GM12878 (cell line): ENCODE measurements at regions of chr22 and their contacts with region 1.

Region 1: GRCh38 chr22:20418211-20418788 is 19.3 kb downstream of the SCARF2 start:
- DNase-seq: no peak
- ATAC-seq: peak; percentile 84
- H3K4me3 ChIP-seq: peak overlapping the region; percentile 45; the same call in 1 of the 2 replicates
- H3K27ac ChIP-seq: no peak overlapping the region
- H3K4me1 ChIP-seq: no peaks in the 10 kb centered on the region
- H3K27me3 ChIP-seq: no peaks in the 10 kb centered on the region
- CTCF ChIP-seq: peak; percentile 77 to 89 (median 80)
- EP300 ChIP-seq: no peak
- POLR2A ChIP-seq: no peak
- RAD21 ChIP-seq: peak; percentile 79

Region 2: GRCh38 chr22:20000169-20000621 is 418.1 kb before region 1 on chr22:
- CTCF ChIA-PET with region 1: no interaction called
- POLR2A ChIA-PET with region 1: no interaction called
- RAD21 ChIA-PET with region 1: no interaction called
- SMC1A ChIA-PET with region 1: no interaction called
- in situ Hi-C with region 1: no loop called
- intact Hi-C with region 1: no loop called
- DNase-seq: no peak
- ATAC-seq: no peak
- H3K4me3 ChIP-seq: no peak overlapping the region
- H3K27ac ChIP-seq: no peak overlapping the region
- H3K4me1 ChIP-seq: no peaks in the 10 kb centered on the region
- H3K27me3 ChIP-seq: peaks cover 0 to 2% of the 10 kb centered on the region in 2 experiments; a peak in 3 of 4 replicates
- CTCF ChIP-seq: no peak
- EP300 ChIP-seq: no peak
- POLR2A ChIP-seq: no peak
- RAD21 ChIP-seq: no peak

Region 3: GRCh38 chr22:20388200-20388599 is 30.1 kb before region 1 on chr22:
- CTCF ChIA-PET with region 1: no interaction called
- POLR2A ChIA-PET with region 1: no interaction called
- RAD21 ChIA-PET with region 1: no interaction called
- SMC1A ChIA-PET with region 1: no interaction called
- in situ Hi-C with region 1: no loop called
- intact Hi-C with region 1: no loop called
- DNase-seq: no peak
- ATAC-seq: no peak
- H3K4me3 ChIP-seq: no peak overlapping the region
- H3K27ac ChIP-seq: no peak overlapping the region
- H3K4me1 ChIP-seq: no peaks in the 10 kb centered on the region
- H3K27me3 ChIP-seq: peaks cover 0 to 3% of the 10 kb centered on the region in 2 experiments; a peak in 1 of 4 replicates
- CTCF ChIP-seq: no peak
- EP300 ChIP-seq: no peak
- POLR2A ChIP-seq: no peak
- RAD21 ChIP-seq: no peak

Region 4: DNA sequence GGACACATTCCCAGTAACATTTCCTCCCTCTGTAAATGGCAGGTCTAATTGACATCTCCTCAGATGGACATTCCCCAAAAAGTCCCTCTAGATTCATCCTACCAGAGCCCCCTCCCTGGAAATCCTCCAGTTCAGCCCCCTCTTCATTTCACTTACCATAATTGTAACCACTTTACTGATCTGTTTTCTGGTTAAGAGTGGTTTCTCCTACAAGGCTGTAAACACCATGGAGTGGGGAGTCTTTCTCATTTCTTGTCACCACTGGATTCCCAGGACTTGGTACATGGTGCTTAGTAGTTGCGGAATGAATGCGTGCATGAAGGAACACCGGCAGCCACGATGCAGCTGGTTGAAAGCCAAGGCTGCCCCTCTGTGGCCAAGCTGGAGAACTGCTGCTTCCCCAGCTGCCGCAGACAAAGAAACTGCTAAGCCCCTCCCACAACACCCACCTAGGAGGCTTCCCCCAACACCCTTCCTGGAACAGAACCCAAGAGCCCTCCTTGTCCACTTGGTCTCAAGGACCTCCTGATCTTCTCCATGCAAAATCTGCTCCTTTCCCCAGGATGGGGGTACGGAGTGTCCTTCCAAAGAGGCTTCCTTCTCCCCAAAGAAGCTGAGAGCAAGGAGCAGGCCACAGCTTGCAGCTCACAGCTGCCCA is 37.9 kb after region 1 on chr22:
- CTCF ChIA-PET with region 1: interaction called, 58 read pairs
- POLR2A ChIA-PET with region 1: interaction called, 3 read pairs
- RAD21 ChIA-PET with region 1: interaction called, 42 read pairs
- SMC1A ChIA-PET with region 1: interaction called, 20 read pairs
- in situ Hi-C with region 1: loop called (anchors 5 kb)
- intact Hi-C with region 1: loop called (anchors 1 kb)
- DNase-seq: peak; percentile 44
- ATAC-seq: peak; percentile 99
- H3K4me3 ChIP-seq: no peak overlapping the region
- H3K27ac ChIP-seq: no peak overlapping the region
- H3K4me1 ChIP-seq: peaks cover 9% of the 10 kb centered on the region
- H3K27me3 ChIP-seq: no peaks in the 10 kb centered on the region
- CTCF ChIP-seq: peak; percentile 92 to 95 (median 95)
- EP300 ChIP-seq: no peak
- POLR2A ChIP-seq: no peak
- RAD21 ChIP-seq: peak; percentile 78

Region 5: GRCh38 chr22:20463324-20464095 is 45.2 kb after region 1 on chr22:
- CTCF ChIA-PET with region 1: interaction called, 13 read pairs
- POLR2A ChIA-PET with region 1: no interaction called
- RAD21 ChIA-PET with region 1: interaction called, 3 read pairs
- SMC1A ChIA-PET with region 1: interaction called, 3 read pairs
- in situ Hi-C with region 1: loop called (anchors 5 kb)
- intact Hi-C with region 1: no loop called
- DNase-seq: no peak
- ATAC-seq: peak; percentile 77
- H3K4me3 ChIP-seq: no peak overlapping the region
- H3K27ac ChIP-seq: peak overlapping the region; percentile 51
- H3K4me1 ChIP-seq: peaks cover 17% of the 10 kb centered on the region
- H3K27me3 ChIP-seq: no peaks in the 10 kb centered on the region
- CTCF ChIP-seq: no peak
- EP300 ChIP-seq: no peak
- POLR2A ChIP-seq: no peak
- RAD21 ChIP-seq: no peak

Region 6: DNA sequence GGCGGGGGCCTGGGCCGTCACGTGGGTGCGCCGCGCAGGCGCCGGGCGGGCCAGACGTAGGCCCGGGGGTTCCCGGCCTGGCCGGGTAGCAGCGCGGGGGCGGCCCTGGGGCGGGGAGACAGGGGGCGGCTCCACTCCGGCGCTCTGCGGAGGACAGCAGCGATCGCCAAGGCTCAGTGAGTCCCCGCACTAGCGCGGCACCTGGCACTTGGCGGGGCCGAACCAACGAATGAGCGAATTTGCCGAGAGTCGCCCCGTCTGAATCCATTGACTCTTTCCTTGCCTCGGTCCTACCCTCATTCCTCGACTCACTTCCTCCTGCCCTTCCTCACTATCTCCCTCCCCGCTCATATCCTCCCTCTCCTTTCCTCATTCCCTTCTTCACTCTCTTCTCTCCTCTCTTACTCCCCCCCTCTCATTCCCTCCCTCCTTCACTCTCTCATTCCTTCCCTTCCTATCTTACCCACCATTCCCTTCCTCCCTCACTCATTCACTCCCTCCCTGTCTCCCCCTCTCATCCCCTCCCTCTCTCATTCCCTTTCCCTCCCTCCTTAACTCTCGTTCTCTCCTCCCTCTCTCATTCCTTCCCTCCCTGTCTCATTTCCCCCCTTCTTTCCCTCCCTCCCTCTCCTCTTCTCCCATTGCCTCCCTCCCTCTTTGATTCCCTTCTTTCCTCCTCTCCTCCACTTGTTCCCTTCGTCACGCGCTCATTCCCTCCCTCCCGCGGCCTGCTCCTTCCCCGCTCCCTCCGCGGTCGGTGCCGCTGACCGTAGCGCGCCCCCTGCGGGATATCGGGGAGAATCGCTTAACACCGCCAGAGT is 77.8 kb after region 1 on chr22:
- CTCF ChIA-PET with region 1: interaction called, 6 read pairs
- POLR2A ChIA-PET with region 1: interaction called, 3 read pairs
- RAD21 ChIA-PET with region 1: interaction called, 7 read pairs
- SMC1A ChIA-PET with region 1: interaction called, 7 read pairs
- in situ Hi-C with region 1: loop called (anchors 5 kb)
- intact Hi-C with region 1: loop called (anchors 1 kb)
- DNase-seq: peak; percentile 44
- ATAC-seq: peak; percentile 98
- H3K4me3 ChIP-seq: peak overlapping the region; percentile 60
- H3K27ac ChIP-seq: peak overlapping the region; percentile 34
- H3K4me1 ChIP-seq: peaks cover 10% of the 10 kb centered on the region; the same call in 1 of the 2 replicates
- H3K27me3 ChIP-seq: no peaks in the 10 kb centered on the region
- CTCF ChIP-seq: peak; percentile 88 to 90 (median 90)
- EP300 ChIP-seq: no peak
- POLR2A ChIP-seq: peak; percentile 68
- RAD21 ChIP-seq: peak; percentile 63

Region 7: GRCh38 chr22:20568989-20569769 is 150.9 kb after region 1 on chr22:
- CTCF ChIA-PET with region 1: interaction called, 6 read pairs
- POLR2A ChIA-PET with region 1: no interaction called
- RAD21 ChIA-PET with region 1: interaction called, 4 read pairs
- SMC1A ChIA-PET with region 1: no interaction called
- in situ Hi-C with region 1: no loop called
- intact Hi-C with region 1: loop called (anchors 10 kb)
- DNase-seq: peak; percentile 33
- ATAC-seq: peak; percentile 84
- H3K4me3 ChIP-seq: no peak overlapping the region
- H3K27ac ChIP-seq: no peak overlapping the region
- H3K4me1 ChIP-seq: peaks cover 14% of the 10 kb centered on the region
- H3K27me3 ChIP-seq: no peaks in the 10 kb centered on the region
- CTCF ChIP-seq: no peak
- EP300 ChIP-seq: no peak
- POLR2A ChIP-seq: 0 out of 2 replicates have a peak, but pooled peaks have one; percentile 2
- RAD21 ChIP-seq: no peak

Region 8: DNA sequence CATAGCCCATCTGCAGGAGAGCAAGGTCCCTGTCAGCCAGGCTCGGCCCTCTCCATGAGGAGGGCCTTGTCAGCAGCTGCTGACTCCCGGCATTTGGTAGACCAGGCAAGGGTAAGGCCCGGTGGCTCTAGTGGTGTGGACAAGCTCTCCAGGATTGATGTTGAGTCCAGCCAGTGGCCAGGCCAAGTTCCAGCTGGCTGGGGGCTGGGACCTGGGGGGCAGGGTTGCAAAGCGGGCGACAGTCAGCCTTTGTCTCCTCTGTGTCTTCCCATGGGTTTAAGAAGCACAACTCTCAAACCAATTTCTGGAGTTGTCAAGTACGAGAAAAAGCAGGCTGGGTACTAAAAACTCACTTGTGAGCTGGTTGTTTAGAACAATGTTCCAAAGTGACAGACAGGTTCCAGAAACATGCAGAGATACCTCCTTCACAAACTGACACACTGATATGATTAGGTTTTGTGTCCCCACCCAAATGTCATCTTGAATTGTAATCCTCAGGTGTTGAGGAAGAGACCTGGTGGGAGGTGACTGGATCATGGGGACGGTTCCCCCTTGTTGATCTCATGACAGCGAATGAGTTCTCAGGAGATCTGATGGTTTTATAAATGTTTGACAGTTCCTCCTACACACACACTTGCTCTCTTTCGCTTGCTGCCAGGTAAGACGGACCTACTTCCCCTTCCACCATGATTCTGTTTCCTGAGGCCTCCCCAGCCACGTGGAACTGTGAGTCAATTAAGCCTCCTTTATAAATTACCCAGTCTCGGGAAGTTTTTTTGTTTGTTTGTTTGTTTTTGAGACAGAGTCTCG is 303.3 kb after region 1 on chr22:
- CTCF ChIA-PET with region 1: no interaction called
- POLR2A ChIA-PET with region 1: no interaction called
- RAD21 ChIA-PET with region 1: no interaction called
- SMC1A ChIA-PET with region 1: no interaction called
- in situ Hi-C with region 1: no loop called
- intact Hi-C with region 1: no loop called
- DNase-seq: no peak
- ATAC-seq: no peak
- H3K4me3 ChIP-seq: no peak overlapping the region
- H3K27ac ChIP-seq: no peak overlapping the region
- H3K4me1 ChIP-seq: no peaks in the 10 kb centered on the region; the same call in none of the 2 replicates
- H3K27me3 ChIP-seq: no peaks in the 10 kb centered on the region
- CTCF ChIP-seq: no peak
- EP300 ChIP-seq: no peak
- POLR2A ChIP-seq: no peak
- RAD21 ChIP-seq: no peak